CD8-positive, alpha-beta T cell (primary cell): ENCODE measurements at regions of chr13 and their contacts with region 1.

Region 1: GRCh38 chr13:50081679-50082425 is 66.6 kb downstream of the KCNRG start:
- DNase-seq: peak; percentile 97 to 99 (median 98)
- ATAC-seq: peak; percentile 69
- H3K4me3 ChIP-seq: peak overlapping the region; percentile 79
- H3K4me3 Mint-ChIP-seq: peak overlapping the region; percentile 95
- H3K27ac ChIP-seq: peak overlapping the region; percentile 61 to 85
- H3K27ac Mint-ChIP-seq: peak overlapping the region; percentile 95
- H3K4me1 ChIP-seq: peaks cover 29% of the 10 kb centered on the region
- H3K4me1 Mint-ChIP-seq: peaks cover 43% of the 10 kb centered on the region
- H3K27me3 ChIP-seq: peaks cover under 1 to 29% of the 10 kb centered on the region in 2 experiments
- H3K27me3 Mint-ChIP-seq: peaks cover 15% of the 10 kb centered on the region
- CTCF ChIP-seq: no peak

Region 2: GRCh38 chr13:48975856-48976575 is 1105.8 kb before region 1 on chr13 and contains the start of gene FNDC3A:
- CTCF ChIA-PET with region 1: no interaction called
- POLR2A ChIA-PET with region 1: no interaction called
- intact Hi-C with region 1: loop called in 1 of 2 experiments (anchors 10 kb)
- DNase-seq: peak; percentile 70 to 93 (median 83)
- ATAC-seq: peak; percentile 70
- H3K4me3 ChIP-seq: peak within 1 kb of the TSS; percentile 79 to 80
- H3K4me3 Mint-ChIP-seq: peak within 1 kb of the TSS; percentile 97
- H3K27ac ChIP-seq: peak within 1 kb of the TSS; percentile 79 to 91
- H3K27ac Mint-ChIP-seq: peak within 1 kb of the TSS; percentile 99
- H3K4me1 ChIP-seq: peaks cover 33% of the 10 kb centered on the region
- H3K4me1 Mint-ChIP-seq: peaks cover 42% of the 10 kb centered on the region
- H3K27me3 ChIP-seq: no peaks in the 10 kb centered on the region
- H3K27me3 Mint-ChIP-seq: no peaks in the 10 kb centered on the region
- CTCF ChIP-seq: no peak
- total RNA-seq, gene FNDC3A: 27.0 to 27.7 TPM

Region 3: DNA sequence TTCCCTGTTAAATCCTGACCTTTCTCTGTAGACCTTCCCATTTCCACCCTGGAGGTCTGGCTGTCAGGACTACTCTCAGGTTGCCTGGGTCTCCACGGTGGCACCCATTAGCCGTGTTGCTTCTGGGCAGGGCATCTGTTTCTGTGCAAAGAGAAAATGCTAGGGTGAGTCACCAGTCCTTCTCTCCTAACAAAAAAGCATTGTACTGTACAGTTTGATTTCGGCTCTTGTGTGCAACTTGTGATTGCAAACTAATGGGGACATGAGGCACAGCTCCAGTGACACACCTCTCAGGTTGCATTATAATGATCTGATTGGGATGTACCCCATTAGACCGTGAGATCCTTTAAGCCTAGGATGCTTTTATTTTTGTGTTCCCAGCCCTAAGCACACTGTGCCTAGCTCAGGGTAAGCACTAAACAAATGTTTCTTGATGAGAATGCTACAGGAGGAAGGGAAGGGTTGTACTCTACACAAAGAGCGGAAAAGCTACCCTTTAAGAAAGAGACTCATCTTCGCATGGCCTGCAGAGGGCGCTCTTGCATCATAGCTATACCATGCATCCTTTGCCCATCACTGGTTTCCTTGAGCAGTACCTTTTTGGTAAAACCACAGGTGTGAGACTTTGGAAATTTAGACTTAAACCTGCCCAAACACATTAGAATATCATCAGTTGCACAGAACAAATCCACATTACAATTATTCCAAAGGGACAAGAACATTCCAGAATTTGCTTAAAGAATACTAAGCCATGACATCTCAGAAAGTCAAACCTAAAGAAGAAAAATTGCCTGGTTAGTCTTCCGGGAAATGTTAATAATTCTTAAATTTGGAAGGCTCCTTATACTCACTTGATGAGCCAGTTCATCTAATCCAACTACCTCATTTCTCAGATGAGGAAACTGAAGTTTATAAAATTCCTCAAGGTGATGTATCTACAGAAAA is 105.3 kb before region 1 on chr13:
- CTCF ChIA-PET with region 1: interaction called, 6 read pairs
- POLR2A ChIA-PET with region 1: interaction called, 3 read pairs
- intact Hi-C with region 1: loop called in 1 of 2 experiments (anchors 1 kb)
- DNase-seq: peak; percentile 53 to 88 (median 78)
- ATAC-seq: peak; percentile 89
- H3K4me3 ChIP-seq: no peak overlapping the region
- H3K4me3 Mint-ChIP-seq: no peak overlapping the region
- H3K27ac ChIP-seq: no peak overlapping the region
- H3K27ac Mint-ChIP-seq: no peak overlapping the region
- H3K4me1 ChIP-seq: no peaks in the 10 kb centered on the region
- H3K4me1 Mint-ChIP-seq: no peaks in the 10 kb centered on the region
- H3K27me3 ChIP-seq: no peaks in the 10 kb centered on the region
- H3K27me3 Mint-ChIP-seq: no peaks in the 10 kb centered on the region
- CTCF ChIP-seq: peak; percentile 70

Region 4: DNA sequence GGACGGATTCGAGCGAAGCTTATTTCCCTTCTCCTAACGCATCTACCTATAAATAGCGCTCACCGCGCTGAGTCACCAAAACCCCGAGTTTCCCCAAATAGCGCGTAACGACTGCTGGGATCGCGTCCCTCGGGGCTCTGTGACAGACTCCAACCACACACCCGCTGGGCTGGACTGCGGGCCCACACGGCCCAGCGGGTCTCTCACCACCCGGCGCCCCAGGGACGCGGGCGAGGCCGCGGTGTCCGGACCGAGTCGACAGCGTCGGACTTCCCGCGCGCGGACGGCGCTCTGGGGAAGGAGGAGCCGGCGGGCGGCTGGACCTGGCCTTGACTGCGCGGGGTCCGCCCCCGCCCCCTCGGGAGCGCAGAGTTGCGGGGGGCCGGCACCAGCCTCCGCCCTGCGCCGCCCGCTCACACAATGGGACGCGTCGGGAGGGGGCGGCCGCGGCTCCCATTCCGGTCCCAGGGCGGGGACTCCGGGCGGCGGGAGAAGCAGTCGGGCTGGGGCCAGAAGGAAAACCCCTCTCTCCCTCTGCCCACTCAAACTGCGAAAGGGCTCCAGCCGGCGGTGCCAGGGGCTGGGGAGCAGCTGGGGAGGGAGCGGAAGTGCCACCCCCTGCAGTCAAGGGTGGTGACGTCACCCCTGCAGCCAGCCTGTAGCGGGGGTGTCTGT is 42.1 kb after region 1 on chr13:
- CTCF ChIA-PET with region 1: interaction called, 112 read pairs
- POLR2A ChIA-PET with region 1: interaction called, 164 read pairs
- intact Hi-C with region 1: loop called (anchors 1 kb)
- DNase-seq: peak in 8 of 9 experiments; percentile 43 to 91 (median 72)
- ATAC-seq: peak; percentile 65
- H3K4me3 ChIP-seq: peak overlapping the region; percentile 87 to 93
- H3K4me3 Mint-ChIP-seq: peak overlapping the region; percentile 90
- H3K27ac ChIP-seq: peak overlapping the region; percentile 90 to 92
- H3K27ac Mint-ChIP-seq: peak overlapping the region; percentile 96
- H3K4me1 ChIP-seq: peaks cover 24% of the 10 kb centered on the region
- H3K4me1 Mint-ChIP-seq: peaks cover 44% of the 10 kb centered on the region
- H3K27me3 ChIP-seq: peaks cover 12 to 19% of the 10 kb centered on the region in 2 experiments
- H3K27me3 Mint-ChIP-seq: peaks cover 15% of the 10 kb centered on the region
- CTCF ChIP-seq: no peak

Region 5: GRCh38 chr13:50365408-50366391 is 283.8 kb after region 1 on chr13:
- CTCF ChIA-PET with region 1: no interaction called
- POLR2A ChIA-PET with region 1: no interaction called
- intact Hi-C with region 1: loop called in 1 of 2 experiments (anchors 10 kb)
- DNase-seq: peak in 5 of 9 experiments; percentile 22 to 72 (median 51)
- ATAC-seq: peak; percentile 80
- H3K4me3 ChIP-seq: peak overlapping the region in 1 of 2 experiments; percentile 23
- H3K4me3 Mint-ChIP-seq: peak overlapping the region; percentile 70
- H3K27ac ChIP-seq: peak overlapping the region; percentile 21 to 80
- H3K27ac Mint-ChIP-seq: peak overlapping the region; percentile 88
- H3K4me1 ChIP-seq: peaks cover 5% of the 10 kb centered on the region
- H3K4me1 Mint-ChIP-seq: peaks cover 37% of the 10 kb centered on the region
- H3K27me3 ChIP-seq: no peaks in the 10 kb centered on the region
- H3K27me3 Mint-ChIP-seq: no peaks in the 10 kb centered on the region
- CTCF ChIP-seq: no peak

Region 6: DNA sequence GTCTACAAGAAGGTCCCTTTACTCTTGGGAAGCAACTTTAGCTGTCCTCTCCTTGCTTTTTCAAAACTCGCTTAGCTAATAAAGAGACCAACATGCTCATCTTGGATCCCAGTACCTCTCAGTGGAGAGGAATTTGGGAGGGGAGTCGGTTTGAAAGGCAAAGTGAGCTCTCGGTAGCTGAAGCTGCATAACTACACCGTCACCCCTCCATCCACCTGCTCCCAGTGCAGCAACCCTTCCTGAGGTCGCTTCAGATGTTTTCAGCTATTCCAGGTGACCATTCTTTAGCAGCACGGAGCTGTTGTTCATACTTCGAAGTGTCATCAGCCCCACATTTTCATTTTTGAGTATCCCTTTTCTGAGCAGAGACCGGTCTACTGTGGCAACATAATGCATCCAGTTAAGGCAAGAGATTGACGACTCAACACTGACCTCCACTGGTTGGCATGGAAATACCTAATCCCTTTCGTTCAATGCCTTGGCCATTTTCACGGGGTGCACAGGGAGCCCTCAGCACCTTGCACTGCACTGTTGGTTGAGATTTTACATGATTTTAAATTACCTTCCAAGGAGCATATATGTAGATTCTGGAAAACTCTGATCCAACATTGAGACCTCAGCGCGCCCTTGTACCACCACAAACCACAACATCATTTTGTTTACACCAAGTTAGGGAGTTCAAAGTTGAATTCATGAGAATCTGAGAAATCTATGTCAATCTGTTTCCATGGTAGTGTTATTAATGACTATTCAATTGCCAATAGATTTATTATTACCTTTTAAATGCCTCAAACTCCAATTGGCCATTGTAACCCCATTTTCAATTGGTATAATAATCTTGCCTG is 719.5 kb after region 1 on chr13:
- CTCF ChIA-PET with region 1: interaction called, 5 read pairs
- POLR2A ChIA-PET with region 1: no interaction called
- intact Hi-C with region 1: loop called (anchors 1 to 5 kb)
- DNase-seq: peak; percentile 25 to 82 (median 57)
- ATAC-seq: peak; percentile 96
- H3K4me3 ChIP-seq: no peak overlapping the region
- H3K4me3 Mint-ChIP-seq: no peak overlapping the region
- H3K27ac ChIP-seq: no peak overlapping the region
- H3K27ac Mint-ChIP-seq: no peak overlapping the region
- H3K4me1 ChIP-seq: no peaks in the 10 kb centered on the region
- H3K4me1 Mint-ChIP-seq: peaks cover 5% of the 10 kb centered on the region
- H3K27me3 ChIP-seq: no peaks in the 10 kb centered on the region
- H3K27me3 Mint-ChIP-seq: no peaks in the 10 kb centered on the region
- CTCF ChIP-seq: peak; percentile 70